ENCODE measurements at regions of chr1 and their contacts with region 1.

Region 1: DNA sequence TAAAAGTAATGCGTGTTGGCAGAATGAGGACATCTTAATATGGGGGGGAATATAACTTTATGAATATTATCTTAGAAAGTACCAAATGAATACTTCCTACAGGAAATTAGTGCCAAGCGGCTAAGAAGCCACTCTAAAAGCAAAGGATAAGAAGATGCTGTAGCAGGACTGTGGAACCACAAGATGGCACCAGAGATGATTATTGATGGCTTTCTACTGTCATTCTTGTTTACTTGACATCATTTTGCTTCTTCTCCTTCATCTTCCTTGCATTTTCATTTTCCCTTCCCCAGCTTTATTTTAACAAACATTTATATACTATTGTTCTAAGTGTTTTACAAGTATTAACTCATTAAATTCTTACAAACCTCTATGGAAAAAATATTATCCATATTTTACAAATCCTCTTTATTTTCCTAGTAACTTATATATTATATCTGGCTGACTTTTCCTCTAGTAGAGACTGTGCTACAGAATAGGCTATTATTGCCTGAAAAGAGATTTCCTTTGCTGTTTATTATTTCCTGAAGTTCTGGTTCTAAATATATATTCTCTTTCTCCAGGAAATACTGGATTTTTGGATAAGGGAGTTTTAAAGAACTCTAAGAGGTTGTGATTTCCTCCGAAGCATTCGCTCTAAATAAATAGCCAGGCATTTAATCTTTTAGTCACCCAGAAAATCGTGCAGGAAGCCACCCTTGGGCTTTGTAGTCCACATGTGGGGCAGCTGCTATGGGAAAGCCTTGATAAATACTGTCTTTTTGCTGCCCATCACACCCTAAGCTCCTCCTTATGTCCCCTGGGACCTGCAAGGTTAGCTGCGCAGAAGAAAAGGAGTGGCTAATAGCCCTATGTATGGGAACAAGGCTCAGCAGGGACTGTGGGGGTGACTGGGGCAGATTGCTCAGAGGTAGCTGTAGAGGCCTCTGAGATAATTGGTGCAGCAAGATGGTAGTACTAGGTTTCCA is 69.8 kb downstream of the TPR start:
- DNase-seq: peak in 3 of 5 donors; percentile 25 to 42 (median 34)
- H3K4me3 ChIP-seq: no peak overlapping the region
- H3K4me3 Mint-ChIP-seq: peak overlapping the region in 3 of 8 donors; percentile 3 to 54 (median 37)
- H3K27ac ChIP-seq: no peak overlapping the region
- H3K27ac Mint-ChIP-seq: peak overlapping the region; percentile 53 to 91 (median 79)
- H3K4me1 ChIP-seq: peaks cover 79% of the 10 kb centered on the region
- H3K4me1 Mint-ChIP-seq: peaks cover 31 to 45% (median 39%) of the 10 kb centered on the region in 4 donors
- H3K27me3 ChIP-seq: no peaks in the 10 kb centered on the region
- H3K27me3 Mint-ChIP-seq: peaks cover 0 to 1% of the 10 kb centered on the region in 2 donors

Region 2: GRCh38 chr1:186272486-186272885 is 32.8 kb before region 1 on chr1:
- CTCF ChIA-PET with region 1: no interaction called
- POLR2A ChIA-PET with region 1: no interaction called
- intact Hi-C with region 1: loop called (anchors 1 kb)
- DNase-seq: peak in 4 of 5 donors; percentile 11 to 19 (median 13)
- H3K4me3 ChIP-seq: no peak overlapping the region
- H3K4me3 Mint-ChIP-seq: no peak overlapping the region
- H3K27ac ChIP-seq: no peak overlapping the region
- H3K27ac Mint-ChIP-seq: no peak overlapping the region
- H3K4me1 ChIP-seq: no peaks in the 10 kb centered on the region
- H3K4me1 Mint-ChIP-seq: peaks cover 0 to 2% (median 0%) of the 10 kb centered on the region in 4 donors
- H3K27me3 ChIP-seq: no peaks in the 10 kb centered on the region
- H3K27me3 Mint-ChIP-seq: no peaks in the 10 kb centered on the region

Region 3: DNA sequence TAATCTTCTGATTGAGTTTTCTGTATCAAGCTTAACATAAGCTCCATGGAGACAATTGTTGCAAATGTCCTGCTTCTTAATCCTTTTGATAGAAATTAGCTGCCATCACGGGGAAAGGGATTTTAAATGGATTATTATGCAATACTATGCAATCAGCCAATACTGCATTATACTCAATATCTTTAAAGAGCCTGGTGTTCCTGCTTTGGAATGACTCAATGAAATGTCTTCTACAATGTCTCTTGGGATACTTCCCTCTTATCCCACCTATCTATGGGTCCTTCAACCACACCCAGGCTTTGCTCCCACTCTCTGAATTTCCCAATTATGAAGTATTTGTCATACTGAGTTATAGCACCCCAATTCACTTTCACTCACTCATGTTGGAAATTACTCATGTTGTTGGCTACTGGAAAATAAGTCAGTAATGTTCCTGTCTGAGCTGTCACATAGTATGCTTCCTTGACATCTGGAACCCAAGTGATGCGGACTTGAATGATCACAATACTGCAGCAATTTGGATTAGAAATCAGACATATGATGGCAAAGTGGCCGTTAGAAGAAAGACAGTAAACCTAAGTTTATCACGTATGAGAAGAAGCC is 15.2 kb before region 1 on chr1:
- CTCF ChIA-PET with region 1: interaction called, 14 read pairs
- POLR2A ChIA-PET with region 1: interaction called, 5 read pairs
- intact Hi-C with region 1: loop called (anchors 2 kb)
- DNase-seq: no peak
- H3K4me3 ChIP-seq: no peak overlapping the region
- H3K4me3 Mint-ChIP-seq: peak overlapping the region in 4 of 8 donors; percentile 1 to 37 (median 15)
- H3K27ac ChIP-seq: no peak overlapping the region
- H3K27ac Mint-ChIP-seq: peak overlapping the region; percentile 5 to 81 (median 57)
- H3K4me1 ChIP-seq: peaks cover 35% of the 10 kb centered on the region
- H3K4me1 Mint-ChIP-seq: peaks cover 19 to 31% (median 27%) of the 10 kb centered on the region in 4 donors
- H3K27me3 ChIP-seq: no peaks in the 10 kb centered on the region
- H3K27me3 Mint-ChIP-seq: peaks cover 0 to 7% of the 10 kb centered on the region in 2 donors

Region 4: GRCh38 chr1:186315570-186315969 is 10.3 kb after region 1 on chr1:
- CTCF ChIA-PET with region 1: interaction called, 7 read pairs
- POLR2A ChIA-PET with region 1: interaction called, 14 read pairs
- intact Hi-C with region 1: no loop called
- DNase-seq: no peak
- H3K4me3 ChIP-seq: no peak overlapping the region
- H3K4me3 Mint-ChIP-seq: peak overlapping the region in 1 of 8 donors; percentile 41
- H3K27ac ChIP-seq: no peak overlapping the region
- H3K27ac Mint-ChIP-seq: peak overlapping the region in 4 of 7 donors; percentile 14 to 30 (median 18)
- H3K4me1 ChIP-seq: no peaks in the 10 kb centered on the region
- H3K4me1 Mint-ChIP-seq: peaks cover 0 to 9% (median 6%) of the 10 kb centered on the region in 4 donors
- H3K27me3 ChIP-seq: no peaks in the 10 kb centered on the region
- H3K27me3 Mint-ChIP-seq: no peaks in the 10 kb centered on the region

Region 5: DNA sequence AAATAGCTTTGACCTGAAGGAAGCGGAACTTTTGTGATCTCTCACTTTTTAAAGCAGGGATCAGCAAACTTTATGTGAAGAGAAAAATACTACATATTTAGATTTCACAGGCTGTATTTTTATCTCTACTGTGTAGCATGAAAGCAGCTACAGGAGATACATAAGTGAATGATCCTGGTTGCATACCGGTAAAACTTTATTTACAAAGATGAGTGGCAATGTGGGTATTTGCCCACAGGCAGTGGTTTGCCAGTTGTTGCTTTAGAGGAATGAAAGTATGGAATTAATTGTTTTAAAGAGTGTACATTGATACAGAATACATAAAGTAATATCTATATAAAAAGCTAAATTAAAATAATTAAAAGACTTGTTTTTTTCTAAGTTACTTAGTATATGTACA is 88.2 kb after region 1 on chr1:
- CTCF ChIA-PET with region 1: no interaction called
- POLR2A ChIA-PET with region 1: no interaction called
- intact Hi-C with region 1: no loop called
- DNase-seq: no peak
- H3K4me3 ChIP-seq: no peak overlapping the region
- H3K4me3 Mint-ChIP-seq: no peak overlapping the region
- H3K27ac ChIP-seq: no peak overlapping the region
- H3K27ac Mint-ChIP-seq: no peak overlapping the region
- H3K4me1 ChIP-seq: no peaks in the 10 kb centered on the region
- H3K4me1 Mint-ChIP-seq: peaks cover 0 to 6% (median 2%) of the 10 kb centered on the region in 4 donors
- H3K27me3 ChIP-seq: no peaks in the 10 kb centered on the region
- H3K27me3 Mint-ChIP-seq: no peaks in the 10 kb centered on the region